Activated naive CD4-positive, alpha-beta T cell treated with anti-CD3 and anti-CD28 coated beads, Interleukin-2, amount 10 ng/mL, durations not matched to agents 7 days and 5 days (primary cell): ENCODE measurements at regions of chr20 and their contacts with region 1.

Region 1: DNA sequence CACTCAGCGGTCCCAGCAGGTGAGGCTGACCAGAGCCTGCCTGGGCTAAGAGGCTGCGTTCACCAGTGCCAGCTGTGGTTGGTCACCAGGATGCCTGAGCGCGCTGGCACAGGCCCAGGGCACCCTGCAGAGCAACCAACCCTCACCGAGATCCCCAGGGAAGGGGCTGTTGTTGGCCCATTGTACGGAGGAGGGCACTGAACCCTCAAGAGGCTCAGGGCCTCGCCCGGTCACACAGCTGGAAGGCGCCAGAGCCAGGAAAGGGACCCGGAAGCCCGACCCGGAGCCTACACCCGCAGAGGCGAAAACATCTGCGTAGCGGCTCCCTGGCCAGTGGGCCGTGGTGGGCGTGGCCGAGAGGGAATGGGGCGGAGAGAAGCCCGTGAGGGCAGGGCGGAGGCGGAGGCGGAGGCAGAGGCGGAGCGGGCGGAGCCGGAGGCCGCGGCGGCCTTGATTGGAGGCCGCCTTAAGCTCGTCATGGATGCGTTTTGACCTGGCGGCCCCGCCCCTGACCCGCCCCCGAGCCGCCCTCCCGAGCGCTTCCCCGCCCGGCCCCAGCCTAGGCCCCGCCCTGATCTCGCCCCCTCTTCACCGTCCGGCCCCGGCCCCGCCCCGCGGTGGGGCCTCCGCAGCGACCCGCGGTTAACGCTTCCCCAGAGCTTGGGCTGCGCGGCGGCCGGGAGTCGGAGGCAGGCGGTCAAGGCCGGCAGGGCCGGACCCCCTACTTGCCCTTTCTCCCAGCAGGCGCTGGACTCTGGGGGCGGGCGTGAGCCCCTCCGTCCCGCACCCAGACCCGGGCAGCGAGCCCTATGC is 2.2 kb upstream of the MRGBP start:
- DNase-seq: peak; percentile 97
- H3K4me3 Mint-ChIP-seq: peak overlapping the region; percentile 76
- H3K27ac Mint-ChIP-seq: peak overlapping the region; percentile 97
- H3K4me1 Mint-ChIP-seq: peaks cover 53% of the 10 kb centered on the region
- H3K27me3 Mint-ChIP-seq: peaks cover 21% of the 10 kb centered on the region

Region 2: DNA sequence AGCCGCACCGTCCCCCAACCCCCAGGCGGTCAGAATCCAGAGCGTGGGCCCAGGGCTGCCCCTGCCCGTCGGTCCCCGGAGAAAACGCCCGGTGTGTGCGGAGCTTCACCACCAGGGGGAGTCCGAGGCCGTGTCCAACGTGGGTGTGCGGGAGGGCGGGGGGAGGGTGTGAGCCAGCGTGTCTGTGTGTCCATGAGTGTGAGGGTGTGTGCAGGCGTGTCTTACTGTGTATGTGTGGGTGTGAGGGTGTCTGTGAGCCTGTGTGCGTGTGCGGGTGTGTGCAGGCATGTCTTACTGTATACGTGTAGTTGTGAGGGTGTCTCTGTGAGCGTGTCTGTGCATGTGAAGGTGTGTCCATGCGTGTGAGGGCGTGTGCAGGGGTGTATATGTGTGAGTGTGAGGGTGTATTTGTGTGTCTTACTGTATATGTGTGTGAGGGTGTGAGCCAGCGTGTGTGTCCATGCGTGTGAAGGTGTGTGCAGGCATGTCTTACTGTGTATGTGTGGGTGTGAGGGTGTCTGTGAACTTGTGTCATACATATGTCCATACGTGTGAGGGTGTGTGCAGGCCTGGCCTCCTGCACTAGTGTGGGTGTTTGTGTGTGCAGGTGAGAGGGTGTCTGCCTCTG is 293.8 kb before region 1 on chr20:
- CTCF ChIA-PET with region 1: interaction called, 28 read pairs
- DNase-seq: peak; percentile 85
- H3K4me3 Mint-ChIP-seq: no peak overlapping the region
- H3K27ac Mint-ChIP-seq: no peak overlapping the region
- H3K4me1 Mint-ChIP-seq: peaks cover 19% of the 10 kb centered on the region
- H3K27me3 Mint-ChIP-seq: peaks cover 11% of the 10 kb centered on the region

Region 3: DNA sequence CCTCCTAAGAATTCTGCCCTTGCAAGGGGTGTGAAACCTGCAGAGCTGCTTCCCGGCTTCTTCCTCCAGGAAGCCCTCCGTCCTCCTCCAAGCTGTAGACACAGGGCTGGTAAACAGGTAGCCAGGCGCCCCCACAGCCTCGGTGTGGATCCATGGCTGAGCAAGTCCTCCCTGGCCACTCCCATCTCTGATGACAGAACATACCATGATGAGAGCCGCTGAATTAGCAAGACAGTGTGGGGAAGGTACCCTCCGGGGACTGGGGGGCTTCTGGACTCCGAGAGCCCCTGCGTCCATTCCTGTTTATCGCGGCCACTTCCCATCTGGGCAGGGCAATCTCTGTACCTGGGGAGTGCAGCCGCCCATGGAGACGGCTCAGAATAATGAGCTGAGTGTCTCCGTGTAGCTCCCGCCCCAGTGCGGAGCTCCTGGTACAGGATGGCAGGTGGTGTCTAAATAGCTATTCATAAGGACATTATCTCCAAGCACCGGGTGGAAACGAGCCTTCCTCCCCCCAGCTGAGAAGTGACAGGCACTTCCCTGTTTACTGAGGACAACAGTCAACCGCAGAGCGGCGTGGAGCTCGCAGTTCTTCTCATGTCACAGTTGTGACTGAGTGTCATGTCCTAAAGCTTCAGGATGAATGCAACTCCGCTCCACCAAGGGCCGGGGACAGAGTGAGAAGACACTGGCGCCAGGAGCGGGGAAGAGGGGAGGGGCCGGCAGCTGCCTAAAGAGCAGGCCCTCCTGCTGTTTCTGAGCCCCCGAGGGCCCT is 108.2 kb before region 1 on chr20:
- CTCF ChIA-PET with region 1: interaction called, 11 read pairs
- DNase-seq: peak; percentile 55
- H3K4me3 Mint-ChIP-seq: no peak overlapping the region
- H3K27ac Mint-ChIP-seq: no peak overlapping the region
- H3K4me1 Mint-ChIP-seq: peaks cover 10% of the 10 kb centered on the region
- H3K27me3 Mint-ChIP-seq: peaks cover 32% of the 10 kb centered on the region

Region 4: GRCh38 chr20:62808211-62808865 is 14.2 kb after region 1 on chr20:
- CTCF ChIA-PET with region 1: interaction called, 14 read pairs
- DNase-seq: peak; percentile 81
- H3K4me3 Mint-ChIP-seq: peak overlapping the region; percentile 53
- H3K27ac Mint-ChIP-seq: peak overlapping the region; percentile 56
- H3K4me1 Mint-ChIP-seq: peaks cover 31% of the 10 kb centered on the region
- H3K27me3 Mint-ChIP-seq: no peaks in the 10 kb centered on the region